ENCODE measurements at regions of chr11 and their contacts with region 1.

Region 1: DNA sequence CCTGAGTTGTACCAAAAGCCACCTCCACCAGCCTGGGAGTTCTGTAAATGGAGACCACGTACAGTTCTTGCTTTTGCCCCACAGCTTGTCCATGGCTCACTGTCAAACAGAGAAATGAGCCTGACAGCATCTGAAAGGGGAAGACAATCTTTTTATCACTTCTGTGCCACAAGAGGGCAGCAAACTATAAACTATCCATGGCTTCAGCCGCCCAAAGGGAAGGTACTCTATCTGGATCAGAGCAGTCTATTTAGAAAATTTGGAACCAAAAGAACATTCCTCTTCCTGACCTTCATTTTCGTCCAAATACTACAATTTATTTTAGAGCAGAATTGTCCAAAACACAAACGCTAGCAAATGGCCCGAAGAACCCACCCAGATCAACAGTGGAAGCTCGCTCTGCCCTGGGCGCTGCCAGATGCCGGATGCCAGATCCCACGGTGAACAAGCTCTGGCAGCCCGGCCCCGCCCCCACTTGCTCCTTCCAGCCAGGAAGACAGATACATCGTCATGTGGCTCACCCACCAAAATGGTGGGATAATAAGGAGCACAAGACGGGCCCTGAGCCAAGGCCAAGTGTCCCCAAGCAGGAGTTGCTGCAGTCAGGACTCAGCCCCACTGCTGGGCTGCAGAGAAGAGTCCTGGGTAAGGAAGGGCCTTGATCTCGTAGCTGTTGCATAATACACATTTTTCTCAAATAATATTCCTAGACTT is 23.9 kb upstream of the SCGB1A1 start:
- DNase-seq: peak; percentile 91
- H3K4me3 ChIP-seq: peak overlapping the region; percentile 71
- H3K27ac ChIP-seq: peak overlapping the region; percentile 34
- H3K4me1 ChIP-seq: peaks cover 23% of the 10 kb centered on the region
- H3K27me3 ChIP-seq: no peaks in the 10 kb centered on the region

Region 2: GRCh38 chr11:62324738-62325556 is 70.0 kb before region 1 on chr11:
- in situ Hi-C with region 1: no loop called
- DNase-seq: peak; percentile 53
- H3K4me3 ChIP-seq: no peak overlapping the region
- H3K27ac ChIP-seq: no peak overlapping the region
- H3K4me1 ChIP-seq: no peaks in the 10 kb centered on the region
- H3K27me3 ChIP-seq: 0 out of 2 replicates have a peak, but pooled peaks cover 4% of the 10 kb centered on the region

Region 3: GRCh38 chr11:62556108-62556871 is 161.3 kb after region 1 on chr11:
- in situ Hi-C with region 1: loop called (anchors 10 kb)
- DNase-seq: peak; percentile 99
- H3K4me3 ChIP-seq: peak overlapping the region; percentile 35
- H3K27ac ChIP-seq: peak overlapping the region; percentile 90
- H3K4me1 ChIP-seq: peaks cover 61% of the 10 kb centered on the region
- H3K27me3 ChIP-seq: no peaks in the 10 kb centered on the region

Region 4: GRCh38 chr11:62678770-62679696 is 284.1 kb after region 1 on chr11 and contains the start of gene UBXN1:
- in situ Hi-C with region 1: loop called (anchors 25 kb)
- DNase-seq: peak; percentile 96
- H3K4me3 ChIP-seq: peak within 1 kb of the TSS; percentile 88
- H3K27ac ChIP-seq: peak within 1 kb of the TSS; percentile 82
- H3K4me1 ChIP-seq: peaks cover 10% of the 10 kb centered on the region
- H3K27me3 ChIP-seq: no peaks in the 10 kb centered on the region
- total RNA-seq, gene UBXN1: 131 and 135 TPM in 2 replicates